Calu3 (cell line): ENCODE measurements at regions of chr6 and their contacts with region 1.

Region 1: DNA sequence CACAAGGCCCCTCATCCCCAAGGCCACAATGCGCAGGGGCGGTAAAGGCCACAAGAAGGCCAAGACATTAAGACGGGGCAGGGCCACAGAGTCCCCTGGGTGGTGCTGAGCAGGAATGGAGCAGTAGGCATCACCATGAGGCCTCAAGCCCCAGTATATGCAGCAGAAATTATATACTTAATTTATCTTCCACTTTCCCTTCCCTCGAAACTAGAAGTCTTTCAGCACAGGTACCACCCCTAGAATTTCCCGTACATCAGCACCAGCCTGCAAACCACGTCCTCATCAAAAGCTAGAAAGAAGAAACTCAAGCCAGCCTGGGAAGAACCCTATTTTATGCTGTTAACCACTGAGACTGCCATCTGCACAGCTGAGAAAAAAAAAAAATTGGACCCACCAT is 89.4 kb downstream of the PLG start:
- DNase-seq: peak; percentile 49
- H3K4me3 Mint-ChIP-seq: peak overlapping the region; percentile 20
- H3K27ac Mint-ChIP-seq: peak overlapping the region; percentile 83
- H3K4me1 Mint-ChIP-seq: peaks cover 44% of the 10 kb centered on the region
- H3K27me3 Mint-ChIP-seq: no peaks in the 10 kb centered on the region
- CTCF ChIP-seq: no peak

Region 2: GRCh38 chr6:160595838-160596832 is 195.3 kb before region 1 on chr6:
- CTCF ChIA-PET with region 1: no interaction called
- intact Hi-C with region 1: no loop called
- DNase-seq: no peak
- H3K4me3 Mint-ChIP-seq: no peak overlapping the region
- H3K27ac Mint-ChIP-seq: no peak overlapping the region
- H3K4me1 Mint-ChIP-seq: no peaks in the 10 kb centered on the region
- H3K27me3 Mint-ChIP-seq: peaks cover 62% of the 10 kb centered on the region
- CTCF ChIP-seq: no peak

Region 3: GRCh38 chr6:160692364-160692959 is 99.0 kb before region 1 on chr6:
- CTCF ChIA-PET with region 1: no interaction called
- intact Hi-C with region 1: no loop called
- DNase-seq: no peak
- H3K4me3 Mint-ChIP-seq: no peak overlapping the region
- H3K27ac Mint-ChIP-seq: no peak overlapping the region
- H3K4me1 Mint-ChIP-seq: no peaks in the 10 kb centered on the region
- H3K27me3 Mint-ChIP-seq: peaks cover 28% of the 10 kb centered on the region
- CTCF ChIP-seq: no peak

Region 4: GRCh38 chr6:160810235-160810634 is 18.8 kb after region 1 on chr6:
- CTCF ChIA-PET with region 1: interaction called, 11 read pairs
- intact Hi-C with region 1: no loop called
- DNase-seq: peak; percentile 66
- H3K4me3 Mint-ChIP-seq: peak overlapping the region; percentile 34
- H3K27ac Mint-ChIP-seq: peak overlapping the region; percentile 69
- H3K4me1 Mint-ChIP-seq: peaks cover 42% of the 10 kb centered on the region
- H3K27me3 Mint-ChIP-seq: no peaks in the 10 kb centered on the region
- CTCF ChIP-seq: no peak

Region 5: DNA sequence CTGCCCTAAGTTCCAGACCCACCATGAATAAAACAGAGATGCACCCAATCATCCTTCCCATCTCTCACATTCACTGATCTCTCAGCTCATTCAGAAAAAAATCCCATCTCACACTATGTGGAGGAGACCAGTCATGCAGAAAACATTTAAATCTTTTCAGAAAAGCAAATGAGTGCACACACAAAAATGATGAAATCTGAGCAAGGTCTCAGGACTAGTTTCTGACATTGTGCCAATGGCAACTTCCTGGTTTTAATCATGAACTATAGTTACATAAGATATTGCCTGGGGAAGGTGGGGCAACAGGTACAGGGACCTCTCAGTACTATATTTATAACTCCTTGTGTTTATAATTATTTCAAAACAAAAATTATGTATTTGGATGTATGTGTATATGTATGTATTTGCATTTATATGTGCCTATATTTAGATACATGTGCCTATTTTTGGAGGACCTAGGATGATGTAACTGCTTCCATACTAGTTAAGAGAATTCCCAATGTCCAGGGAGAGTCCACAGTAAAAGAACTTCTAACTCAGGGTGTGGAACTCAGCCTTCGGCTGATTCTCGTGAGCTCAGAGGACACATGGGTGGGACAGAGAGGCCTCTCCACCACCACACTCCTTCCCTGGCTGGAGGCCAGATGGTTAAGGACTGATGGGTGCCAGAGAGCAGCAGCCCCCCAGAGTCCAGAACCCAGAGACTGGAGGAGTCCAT is 128.4 kb after region 1 on chr6:
- CTCF ChIA-PET with region 1: no interaction called
- intact Hi-C with region 1: loop called (anchors 5 kb)
- DNase-seq: peak; percentile 47
- H3K4me3 Mint-ChIP-seq: peak overlapping the region; percentile 49
- H3K27ac Mint-ChIP-seq: peak overlapping the region; percentile 93
- H3K4me1 Mint-ChIP-seq: peaks cover 32% of the 10 kb centered on the region
- H3K27me3 Mint-ChIP-seq: no peaks in the 10 kb centered on the region
- CTCF ChIP-seq: no peak

Region 6: DNA sequence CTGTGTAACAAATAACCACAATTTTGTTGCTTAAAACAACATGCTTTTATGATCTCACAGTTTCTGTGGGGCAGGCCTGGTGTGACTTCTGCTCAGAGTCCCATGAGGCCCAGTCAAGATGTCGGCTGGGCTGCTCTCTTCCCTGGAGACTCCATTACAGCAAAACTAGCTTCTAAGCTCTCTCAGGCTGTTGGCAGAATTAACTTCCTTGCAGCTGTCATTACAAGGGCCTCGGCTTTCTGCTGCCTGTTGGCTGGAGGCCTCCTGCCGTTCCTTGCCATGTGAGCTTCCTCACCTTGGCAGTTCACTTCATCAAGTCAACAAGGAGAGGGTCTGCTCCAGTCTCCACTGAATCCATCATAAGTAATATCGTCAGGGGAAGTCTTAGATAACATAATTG is 1276.9 kb after region 1 on chr6:
- CTCF ChIA-PET with region 1: no interaction called
- intact Hi-C with region 1: no loop called
- DNase-seq: no peak
- H3K4me3 Mint-ChIP-seq: no peak overlapping the region
- H3K27ac Mint-ChIP-seq: no peak overlapping the region
- H3K4me1 Mint-ChIP-seq: no peaks in the 10 kb centered on the region
- H3K27me3 Mint-ChIP-seq: no peaks in the 10 kb centered on the region
- CTCF ChIP-seq: no peak